B cell (primary cell): ENCODE measurements at regions of chr14 and their contacts with region 1.

Region 1: GRCh38 chr14:24160850-24161804 is at the start of gene IRF9:
- DNase-seq: peak; percentile 97
- ATAC-seq: peak; percentile 94
- H3K4me3 ChIP-seq: peak within 1 kb of the TSS; percentile 69 to 100 (median 91)
- H3K4me3 Mint-ChIP-seq: peak within 1 kb of the TSS; percentile 100
- H3K27ac ChIP-seq: peak within 1 kb of the TSS; percentile 85 to 88
- H3K27ac Mint-ChIP-seq: peak within 1 kb of the TSS; percentile 99
- H3K4me1 ChIP-seq: peaks cover 29 to 39% of the 10 kb centered on the region in 2 donors
- H3K4me1 Mint-ChIP-seq: peaks cover 42% of the 10 kb centered on the region
- H3K27me3 ChIP-seq: no peaks in the 10 kb centered on the region
- H3K27me3 Mint-ChIP-seq: no peaks in the 10 kb centered on the region
- CTCF ChIP-seq: peak; percentile 81
- total RNA-seq, gene IRF9: 243 and 269 TPM in 2 replicates

Region 2: GRCh38 chr14:23751616-23752015 is 409.5 kb before region 1 on chr14:
- CTCF ChIA-PET with region 1: no interaction called
- POLR2A ChIA-PET with region 1: no interaction called
- intact Hi-C with region 1: no loop called
- DNase-seq: no peak
- ATAC-seq: no peak
- H3K4me3 ChIP-seq: no peak overlapping the region
- H3K4me3 Mint-ChIP-seq: no peak overlapping the region
- H3K27ac ChIP-seq: no peak overlapping the region
- H3K27ac Mint-ChIP-seq: no peak overlapping the region
- H3K4me1 ChIP-seq: no peaks in the 10 kb centered on the region
- H3K4me1 Mint-ChIP-seq: no peaks in the 10 kb centered on the region
- H3K27me3 ChIP-seq: no peaks in the 10 kb centered on the region
- H3K27me3 Mint-ChIP-seq: peaks cover 29% of the 10 kb centered on the region
- CTCF ChIP-seq: no peak

Region 3: GRCh38 chr14:24086193-24086955 is 74.8 kb before region 1 on chr14:
- CTCF ChIA-PET with region 1: interaction called, 5 read pairs
- POLR2A ChIA-PET with region 1: no interaction called
- intact Hi-C with region 1: loop called (anchors 1 kb)
- DNase-seq: no peak
- ATAC-seq: no peak
- H3K4me3 ChIP-seq: no peak overlapping the region
- H3K4me3 Mint-ChIP-seq: no peak overlapping the region
- H3K27ac ChIP-seq: no peak overlapping the region
- H3K27ac Mint-ChIP-seq: no peak overlapping the region
- H3K4me1 ChIP-seq: peaks cover 5 to 16% of the 10 kb centered on the region in 2 donors
- H3K4me1 Mint-ChIP-seq: peaks cover 17% of the 10 kb centered on the region
- H3K27me3 ChIP-seq: no peaks in the 10 kb centered on the region
- H3K27me3 Mint-ChIP-seq: no peaks in the 10 kb centered on the region
- CTCF ChIP-seq: no peak

Region 4: DNA sequence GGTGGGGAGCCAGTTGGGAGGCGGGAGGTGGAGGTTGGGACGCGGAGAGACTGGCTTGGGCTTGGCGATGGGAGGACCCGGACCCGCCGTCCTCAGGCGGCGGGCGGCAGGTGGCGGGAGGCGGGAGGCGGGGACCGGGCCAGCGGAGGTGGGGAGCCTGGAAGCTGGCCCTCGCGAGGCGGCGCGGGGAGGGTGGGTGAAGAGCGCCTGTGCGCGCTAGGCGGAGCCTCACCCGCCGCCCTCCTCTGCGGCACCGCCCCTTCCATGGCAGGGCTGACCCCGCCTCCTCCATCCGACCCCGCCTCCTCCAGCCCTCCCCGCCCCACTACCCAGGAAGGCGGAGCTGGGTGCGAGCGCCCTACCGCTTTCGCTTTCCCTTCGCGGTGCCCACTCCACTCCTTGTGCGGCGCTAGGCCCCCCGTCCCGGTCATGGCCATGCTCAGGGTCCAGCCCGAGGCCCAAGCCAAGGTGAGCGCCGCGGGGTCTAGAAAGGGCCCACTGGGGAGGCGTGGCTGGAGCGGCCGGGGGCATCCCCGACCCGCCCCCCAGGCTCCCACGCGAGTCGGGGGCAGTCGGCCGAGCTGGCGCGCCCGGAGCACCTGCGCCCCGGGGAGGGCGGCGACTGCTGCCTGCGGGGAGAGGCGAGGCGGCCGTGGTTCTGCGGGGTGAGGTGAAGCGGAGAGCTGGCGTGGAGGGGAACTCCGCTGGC is 25.1 kb before region 1 on chr14 and contains the start of gene PSME1:
- CTCF ChIA-PET with region 1: interaction called, 43 read pairs
- POLR2A ChIA-PET with region 1: interaction called, 15 read pairs
- intact Hi-C with region 1: loop called (anchors 1 kb)
- DNase-seq: peak; percentile 96
- ATAC-seq: peak; percentile 97
- H3K4me3 ChIP-seq: peak within 1 kb of the TSS; percentile 54 to 96 (median 78)
- H3K4me3 Mint-ChIP-seq: peak within 1 kb of the TSS; percentile 92
- H3K27ac ChIP-seq: peak within 1 kb of the TSS; percentile 87 to 97
- H3K27ac Mint-ChIP-seq: peak within 1 kb of the TSS; percentile 94
- H3K4me1 ChIP-seq: peaks cover 33 to 43% of the 10 kb centered on the region in 2 donors
- H3K4me1 Mint-ChIP-seq: peaks cover 57% of the 10 kb centered on the region
- H3K27me3 ChIP-seq: no peaks in the 10 kb centered on the region
- H3K27me3 Mint-ChIP-seq: no peaks in the 10 kb centered on the region
- CTCF ChIP-seq: no peak
- total RNA-seq, gene PSME1: 227 and 237 TPM in 2 replicates

Region 5: GRCh38 chr14:24171422-24172260 is 10.5 kb after region 1 on chr14 and contains the start of gene REC8:
- CTCF ChIA-PET with region 1: interaction called, 22 read pairs
- POLR2A ChIA-PET with region 1: interaction called, 18 read pairs
- intact Hi-C with region 1: loop called (anchors 1 kb)
- DNase-seq: peak; percentile 89
- ATAC-seq: peak; percentile 92
- H3K4me3 ChIP-seq: peak within 1 kb of the TSS; percentile 47 to 72 (median 60)
- H3K4me3 Mint-ChIP-seq: peak within 1 kb of the TSS; percentile 93
- H3K27ac ChIP-seq: no peak within 1 kb of the TSS
- H3K27ac Mint-ChIP-seq: peak within 1 kb of the TSS; percentile 79
- H3K4me1 ChIP-seq: peaks cover 11 to 23% of the 10 kb centered on the region in 2 donors
- H3K4me1 Mint-ChIP-seq: peaks cover 20% of the 10 kb centered on the region
- H3K27me3 ChIP-seq: no peaks in the 10 kb centered on the region
- H3K27me3 Mint-ChIP-seq: no peaks in the 10 kb centered on the region
- CTCF ChIP-seq: no peak
- total RNA-seq, gene REC8: 48.4 and 62.1 TPM in 2 replicates

Region 6: DNA sequence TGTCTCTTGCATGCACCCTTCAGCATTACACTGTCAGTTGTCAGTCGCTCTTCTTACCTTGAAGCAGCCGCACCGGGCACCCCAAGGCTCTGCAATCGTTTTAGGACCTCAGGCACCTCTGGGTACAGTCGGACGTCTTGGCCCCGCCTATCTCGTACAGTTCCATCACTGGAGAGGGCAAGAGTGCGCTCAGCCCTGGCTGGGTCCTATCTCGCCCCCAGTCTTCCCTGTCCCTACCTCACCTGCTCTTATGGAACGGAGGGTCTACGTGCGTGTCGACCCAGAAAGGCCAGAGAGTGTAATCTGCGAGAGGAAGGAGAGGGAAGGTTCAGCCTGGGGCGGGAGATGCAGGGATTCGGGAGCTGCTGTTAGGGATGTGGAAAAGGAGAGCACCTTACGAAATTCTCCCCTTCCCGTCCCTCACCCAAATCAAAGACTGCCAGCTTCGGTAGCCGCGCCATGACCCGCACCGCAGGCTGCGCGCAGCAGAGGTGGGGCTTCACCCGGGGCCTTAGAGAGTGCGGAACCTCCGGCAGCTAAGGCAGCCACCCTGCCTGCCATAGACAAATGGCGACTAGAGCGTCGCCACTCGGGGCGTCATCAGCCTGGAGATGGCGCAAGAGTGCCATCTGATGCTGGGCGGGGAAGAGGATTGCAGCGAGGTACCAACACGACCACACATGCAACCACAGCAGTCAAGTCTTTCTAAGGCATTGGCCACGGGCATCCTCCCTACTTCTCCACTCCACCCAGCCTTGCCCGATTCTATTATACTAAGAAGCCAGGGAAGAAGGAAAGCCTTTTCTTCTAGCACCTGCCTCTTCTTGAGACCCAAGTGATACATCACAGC is 54.6 kb after region 1 on chr14 and contains the start of gene MDP1:
- CTCF ChIA-PET with region 1: interaction called, 11 read pairs
- POLR2A ChIA-PET with region 1: interaction called, 8 read pairs
- intact Hi-C with region 1: no loop called
- DNase-seq: peak; percentile 94
- ATAC-seq: peak; percentile 75
- H3K4me3 ChIP-seq: peak within 1 kb of the TSS; percentile 88 to 99 (median 96)
- H3K4me3 Mint-ChIP-seq: peak within 1 kb of the TSS; percentile 93
- H3K27ac ChIP-seq: peak within 1 kb of the TSS; percentile 89 to 98
- H3K27ac Mint-ChIP-seq: peak within 1 kb of the TSS; percentile 96
- H3K4me1 ChIP-seq: peaks cover 32 to 33% of the 10 kb centered on the region in 2 donors
- H3K4me1 Mint-ChIP-seq: peaks cover 38% of the 10 kb centered on the region
- H3K27me3 ChIP-seq: no peaks in the 10 kb centered on the region
- H3K27me3 Mint-ChIP-seq: no peaks in the 10 kb centered on the region
- CTCF ChIP-seq: peak; percentile 80
- total RNA-seq, gene MDP1: 11.3 and 17.0 TPM in 2 replicates

Region 7: DNA sequence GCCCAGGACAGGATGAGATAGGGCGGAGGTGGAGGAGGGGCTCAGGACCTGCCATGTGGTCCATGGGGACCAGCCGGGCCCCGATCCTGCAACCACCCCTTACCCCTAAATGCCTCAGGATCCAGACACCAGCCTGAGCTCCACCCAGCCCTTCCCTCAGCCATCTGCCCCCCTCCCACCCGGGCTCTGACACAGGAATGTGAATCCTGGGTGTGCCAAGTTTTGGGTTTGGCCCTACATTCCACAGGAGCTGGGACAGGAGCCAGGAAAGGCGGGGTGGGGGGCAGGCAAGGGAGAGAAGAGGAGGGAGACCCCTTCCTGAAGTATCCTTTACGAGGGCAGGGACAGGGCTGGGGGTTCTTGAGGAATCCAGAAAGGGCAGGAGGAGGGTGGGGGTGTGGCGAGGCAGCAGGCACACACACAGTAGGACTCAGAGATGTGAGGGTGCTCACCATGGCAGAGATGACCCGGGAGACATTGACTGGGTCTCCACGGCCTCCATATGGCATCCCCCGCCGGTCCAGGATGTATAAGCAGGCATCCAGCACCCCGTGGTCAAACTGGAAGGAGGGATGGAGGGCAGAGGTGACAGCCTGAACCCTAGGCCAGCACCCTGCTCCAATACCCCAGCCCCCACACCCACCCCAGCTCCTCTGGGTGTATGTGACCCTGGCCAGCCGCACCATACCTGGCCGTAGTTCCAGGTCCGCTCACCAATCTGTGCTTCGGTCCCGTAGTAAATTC is 98.3 kb after region 1 on chr14:
- CTCF ChIA-PET with region 1: no interaction called
- POLR2A ChIA-PET with region 1: no interaction called
- intact Hi-C with region 1: no loop called
- DNase-seq: no peak
- ATAC-seq: no peak
- H3K4me3 ChIP-seq: no peak overlapping the region
- H3K4me3 Mint-ChIP-seq: no peak overlapping the region
- H3K27ac ChIP-seq: no peak overlapping the region
- H3K27ac Mint-ChIP-seq: no peak overlapping the region
- H3K4me1 ChIP-seq: no peaks in the 10 kb centered on the region
- H3K4me1 Mint-ChIP-seq: no peaks in the 10 kb centered on the region
- H3K27me3 ChIP-seq: no peaks in the 10 kb centered on the region
- H3K27me3 Mint-ChIP-seq: no peaks in the 10 kb centered on the region
- CTCF ChIP-seq: no peak

Region 8: DNA sequence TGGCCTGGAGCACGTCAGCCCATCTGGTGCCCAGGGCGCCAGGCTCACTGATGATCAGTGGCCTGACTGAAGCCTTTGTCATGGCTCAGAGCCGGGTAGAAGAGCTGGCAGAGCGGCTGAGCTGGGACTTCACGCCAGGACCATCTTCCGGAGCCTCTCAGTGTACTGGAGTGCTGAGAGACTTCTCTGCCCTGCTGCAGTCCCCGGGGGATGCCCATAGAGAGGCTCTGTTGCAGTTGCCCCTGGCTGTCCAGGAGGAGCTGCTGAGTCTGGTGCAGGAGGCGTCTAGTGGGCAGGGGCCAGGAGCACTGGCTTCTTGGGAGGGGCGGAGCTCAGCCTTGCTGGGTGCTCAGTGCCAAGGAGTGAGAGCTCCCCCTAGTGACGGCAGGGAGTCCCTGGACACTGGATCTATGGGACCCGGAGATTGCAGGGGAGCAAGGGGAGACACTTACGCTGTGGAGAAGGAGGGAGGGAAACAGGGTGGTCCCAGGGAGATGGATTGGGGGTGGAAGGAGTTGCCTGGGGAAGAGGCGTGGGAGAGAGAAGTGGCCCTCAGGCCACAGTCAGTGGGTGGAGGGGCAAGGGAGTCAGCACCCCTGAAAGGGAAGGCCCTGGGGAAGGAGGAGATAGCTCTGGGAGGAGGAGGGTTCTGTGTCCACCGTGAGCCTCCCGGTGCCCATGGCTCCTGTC is 270.6 kb after region 1 on chr14:
- CTCF ChIA-PET with region 1: interaction called, 12 read pairs
- POLR2A ChIA-PET with region 1: interaction called, 6 read pairs
- intact Hi-C with region 1: no loop called
- DNase-seq: peak; percentile 90
- ATAC-seq: peak; percentile 41
- H3K4me3 ChIP-seq: peak overlapping the region in 4 of 5 experiments; percentile 77 to 98 (median 93)
- H3K4me3 Mint-ChIP-seq: peak overlapping the region; percentile 94
- H3K27ac ChIP-seq: peak overlapping the region; percentile 98 to 99
- H3K27ac Mint-ChIP-seq: peak overlapping the region; percentile 98
- H3K4me1 ChIP-seq: peaks cover 32 to 43% of the 10 kb centered on the region in 2 donors
- H3K4me1 Mint-ChIP-seq: peaks cover 50% of the 10 kb centered on the region
- H3K27me3 ChIP-seq: no peaks in the 10 kb centered on the region
- H3K27me3 Mint-ChIP-seq: no peaks in the 10 kb centered on the region
- CTCF ChIP-seq: peak; percentile 87